Common myeloid progenitor, CD34-positive (primary cell): ENCODE measurements at regions of chrX and their contacts with region 1.

Region 1: DNA sequence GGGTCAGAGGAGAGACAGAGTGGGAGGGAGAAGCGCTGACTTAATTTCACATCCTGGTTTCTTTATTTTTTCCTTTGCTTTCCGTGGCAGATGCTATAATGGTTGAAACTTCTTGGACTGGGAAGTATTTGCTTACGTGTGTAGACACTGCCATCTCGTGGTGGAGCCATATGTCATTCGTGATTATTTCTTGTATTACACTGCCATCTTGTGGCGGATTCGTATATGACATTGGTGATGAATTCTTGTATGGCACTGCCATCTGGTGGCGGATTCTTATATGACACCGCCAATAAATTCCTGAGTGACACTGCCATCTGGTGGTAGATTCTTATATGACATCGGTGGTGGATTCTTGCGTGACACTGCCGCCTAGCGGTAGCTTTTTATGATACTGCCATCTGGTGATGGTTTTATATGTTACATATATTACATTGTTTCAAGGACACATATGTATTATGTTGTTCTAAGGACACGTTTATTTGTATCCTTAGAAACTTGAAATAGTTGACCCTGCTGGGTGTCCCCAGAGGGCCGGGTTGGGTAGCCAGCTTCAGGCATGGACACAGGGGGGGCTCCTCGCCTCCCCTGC is 37.3 kb upstream of the CLCN4 start:
- DNase-seq: peak; percentile 84 to 96 (median 92)
- H3K4me3 ChIP-seq: no peak overlapping the region
- H3K27ac ChIP-seq: no peak overlapping the region
- H3K4me1 ChIP-seq: peaks cover 5 to 34% (median 21%) of the 10 kb centered on the region in 4 experiments
- H3K27me3 ChIP-seq: no peaks in the 10 kb centered on the region

Region 2: DNA sequence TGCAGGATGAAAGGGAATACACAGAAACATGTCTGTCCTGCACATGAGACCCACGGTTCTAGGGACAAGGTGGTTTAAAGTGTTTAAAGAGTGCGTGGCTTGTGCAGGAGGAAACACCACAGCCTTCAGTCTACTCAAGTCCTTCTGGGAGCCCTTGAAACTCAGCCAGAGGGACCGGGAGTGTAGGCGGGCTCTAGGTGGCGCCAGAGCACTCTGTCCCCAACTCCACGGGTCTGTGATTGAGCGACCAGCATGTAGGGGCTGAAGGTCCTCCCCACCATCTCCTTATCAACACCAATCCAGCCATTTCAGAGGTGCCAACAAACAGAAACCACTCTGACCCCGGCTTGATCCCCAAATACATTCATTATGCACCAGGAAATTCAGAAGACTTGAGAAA is 234.3 kb before region 1 on chrX:
- CTCF ChIA-PET with region 1: interaction called, 20 read pairs
- POLR2A ChIA-PET with region 1: no interaction called
- DNase-seq: peak; percentile 60 to 75 (median 69)
- H3K4me3 ChIP-seq: no peak overlapping the region
- H3K27ac ChIP-seq: no peak overlapping the region
- H3K4me1 ChIP-seq: peaks cover 2 to 10% (median 3%) of the 10 kb centered on the region in 4 experiments
- H3K27me3 ChIP-seq: peaks cover 0 to 7% (median 0%) of the 10 kb centered on the region in 5 experiments

Region 3: DNA sequence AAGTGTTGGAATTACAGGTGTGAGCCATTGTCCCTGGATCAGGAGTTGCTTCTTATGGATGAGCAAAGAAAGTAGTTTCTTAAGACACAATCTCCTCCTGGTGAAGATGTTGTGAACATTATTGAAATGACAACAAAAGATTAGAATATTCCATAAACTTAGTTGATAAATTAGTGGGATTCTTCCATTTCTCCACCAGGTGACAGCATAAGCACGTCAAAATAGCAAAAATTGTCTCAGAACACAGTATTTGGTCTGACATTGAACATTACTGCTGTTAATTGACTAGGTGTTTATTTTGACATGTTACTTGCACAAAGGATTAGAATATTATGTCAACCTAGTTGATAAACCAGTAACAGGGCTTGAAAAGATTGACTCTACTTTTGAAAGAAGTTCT is 130.7 kb before region 1 on chrX:
- CTCF ChIA-PET with region 1: interaction called, 84 read pairs
- POLR2A ChIA-PET with region 1: no interaction called
- DNase-seq: peak in 2 of 3 donors; percentile 38 to 55
- H3K4me3 ChIP-seq: no peak overlapping the region
- H3K27ac ChIP-seq: no peak overlapping the region
- H3K4me1 ChIP-seq: peaks cover 0 to 4% (median under 1%) of the 10 kb centered on the region in 4 experiments
- H3K27me3 ChIP-seq: no peaks in the 10 kb centered on the region

Region 4: DNA sequence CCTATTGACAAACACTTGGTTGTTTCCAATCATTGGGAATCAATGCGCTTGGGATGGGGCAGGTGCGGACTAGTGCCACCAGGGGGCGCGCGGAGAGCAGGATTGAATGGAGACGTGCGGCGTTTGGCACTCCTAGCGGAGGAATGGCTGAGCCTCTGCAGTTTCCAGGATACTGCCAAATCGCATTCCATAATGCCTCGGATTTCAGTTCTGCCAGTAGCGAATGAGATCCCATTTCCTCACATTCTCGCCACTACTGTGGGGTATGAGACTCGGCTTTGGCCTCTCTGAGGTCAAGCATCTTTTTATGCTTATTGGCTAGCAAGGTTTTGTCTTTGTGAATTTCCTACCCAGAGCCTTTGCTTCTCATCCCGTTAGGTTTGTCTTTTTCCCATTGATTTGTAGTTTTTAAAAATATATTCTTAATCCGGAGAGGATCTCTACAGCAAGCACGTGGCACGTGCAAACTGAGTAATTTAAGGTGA is 123.6 kb before region 1 on chrX:
- CTCF ChIA-PET with region 1: interaction called, 84 read pairs
- POLR2A ChIA-PET with region 1: no interaction called
- DNase-seq: peak; percentile 61 to 74 (median 67)
- H3K4me3 ChIP-seq: no peak overlapping the region
- H3K27ac ChIP-seq: no peak overlapping the region
- H3K4me1 ChIP-seq: peaks cover 0 to 2% (median 0%) of the 10 kb centered on the region in 4 experiments
- H3K27me3 ChIP-seq: no peaks in the 10 kb centered on the region

Region 5: GRCh38 chrX:10106806-10107205 is 12.7 kb before region 1 on chrX:
- CTCF ChIA-PET with region 1: interaction called, 18 read pairs
- POLR2A ChIA-PET with region 1: no interaction called
- DNase-seq: peak in 2 of 3 donors; percentile 28 to 48
- H3K4me3 ChIP-seq: no peak overlapping the region
- H3K27ac ChIP-seq: no peak overlapping the region
- H3K4me1 ChIP-seq: peaks cover 0 to 26% (median 12%) of the 10 kb centered on the region in 4 experiments
- H3K27me3 ChIP-seq: no peaks in the 10 kb centered on the region

Region 6: GRCh38 chrX:10243106-10243505 is 123.6 kb after region 1 on chrX:
- CTCF ChIA-PET with region 1: no interaction called
- POLR2A ChIA-PET with region 1: no interaction called
- DNase-seq: no peak
- H3K4me3 ChIP-seq: no peak overlapping the region
- H3K27ac ChIP-seq: no peak overlapping the region
- H3K4me1 ChIP-seq: no peaks in the 10 kb centered on the region
- H3K27me3 ChIP-seq: peaks cover 0 to 3% (median 0%) of the 10 kb centered on the region in 5 experiments